ENCODE measurements at regions of chr13 and their contacts with region 1.

Region 1: DNA sequence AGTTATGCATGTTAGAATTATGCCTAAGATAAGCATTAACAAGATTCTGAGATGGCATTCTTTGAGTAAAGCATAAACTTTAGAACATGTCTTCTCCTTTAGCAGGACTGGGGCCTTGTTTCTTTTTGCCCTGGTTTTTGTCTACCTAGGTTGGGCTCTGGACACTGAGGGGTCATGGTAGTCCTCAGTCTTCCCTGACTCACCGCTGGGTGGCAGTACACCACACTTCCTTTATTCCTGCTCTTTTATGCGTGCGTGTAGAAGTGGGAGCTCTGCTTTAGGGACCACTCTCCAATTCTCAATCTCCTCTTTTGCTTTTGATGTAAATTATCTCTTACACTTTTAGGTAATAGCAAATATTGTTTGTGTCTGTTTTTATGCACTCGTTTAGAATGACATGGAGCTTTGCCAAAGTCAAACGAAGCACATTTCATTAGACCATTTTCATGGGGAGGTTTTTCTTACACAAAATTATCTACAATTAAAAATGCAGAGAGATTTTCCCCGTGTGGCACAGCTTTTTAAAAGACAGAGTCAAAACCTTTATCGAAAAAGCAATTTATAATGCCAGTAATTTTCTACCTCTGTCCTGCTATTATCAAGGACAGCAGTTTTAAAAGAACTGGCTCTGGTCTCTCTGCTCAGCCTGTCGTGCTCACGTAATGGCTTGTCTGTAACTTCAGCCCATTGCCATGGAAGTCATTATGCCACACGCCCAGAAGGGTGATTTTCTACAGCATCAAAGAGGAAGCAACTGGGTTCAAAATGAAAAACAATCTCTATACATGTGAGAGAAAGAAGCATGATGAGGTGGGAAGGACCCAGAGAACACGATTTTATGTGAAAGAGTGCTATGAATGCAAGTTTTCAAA is 413.9 kb downstream of the COG6 start:
- DNase-seq: peak; percentile 78
- ATAC-seq: peak; percentile 95
- H3K4me3 Mint-ChIP-seq: no peak overlapping the region
- H3K27ac Mint-ChIP-seq: no peak overlapping the region
- H3K4me1 Mint-ChIP-seq: peaks cover 19% of the 10 kb centered on the region
- H3K27me3 Mint-ChIP-seq: no peaks in the 10 kb centered on the region
- CTCF ChIP-seq: peak; percentile 76

Region 2: GRCh38 chr13:40084934-40085333 is 15.5 kb after region 1 on chr13:
- CTCF ChIA-PET with region 1: interaction called, 11 read pairs
- POLR2A ChIA-PET with region 1: no interaction called
- DNase-seq: no peak
- ATAC-seq: no peak
- H3K4me3 Mint-ChIP-seq: no peak overlapping the region
- H3K27ac Mint-ChIP-seq: no peak overlapping the region
- H3K4me1 Mint-ChIP-seq: peaks cover 25% of the 10 kb centered on the region
- H3K27me3 Mint-ChIP-seq: no peaks in the 10 kb centered on the region; the same call in 1 of the 2 replicates
- CTCF ChIP-seq: no peak

Region 3: DNA sequence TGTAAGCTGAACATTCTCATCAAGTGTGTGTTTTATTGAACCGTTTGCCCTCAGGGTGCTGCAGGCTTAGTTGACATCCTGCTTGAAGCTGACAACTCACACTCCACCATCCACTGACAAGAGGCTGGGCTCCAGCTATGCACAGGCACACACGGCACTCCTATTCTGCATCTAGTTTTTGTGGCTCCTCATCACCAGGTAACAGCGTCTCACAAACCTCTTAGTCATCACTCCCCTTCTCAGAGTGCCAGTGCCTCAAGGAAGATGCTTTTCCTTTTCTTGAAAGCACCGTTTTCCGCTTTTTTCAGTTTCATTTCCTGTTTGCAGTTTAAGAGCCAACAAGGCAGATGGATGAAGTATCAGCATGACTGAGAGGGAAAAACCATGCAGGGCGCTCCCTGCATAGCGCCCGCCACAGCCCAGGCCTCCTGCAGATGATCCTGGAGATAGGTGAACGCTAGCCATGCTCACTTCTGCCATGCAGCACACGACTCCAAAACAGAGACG is 77.3 kb after region 1 on chr13:
- CTCF ChIA-PET with region 1: interaction called, 26 read pairs
- POLR2A ChIA-PET with region 1: no interaction called
- DNase-seq: no peak
- ATAC-seq: no peak
- H3K4me3 Mint-ChIP-seq: no peak overlapping the region
- H3K27ac Mint-ChIP-seq: no peak overlapping the region
- H3K4me1 Mint-ChIP-seq: peaks cover 8% of the 10 kb centered on the region; the same call in 1 of the 2 replicates
- H3K27me3 Mint-ChIP-seq: no peaks in the 10 kb centered on the region; the same call in 1 of the 2 replicates
- CTCF ChIP-seq: no peak